Sciatic nerve (tissue), 2 donors: ENCODE measurements at regions of chr16 and their contacts with region 1.

Region 1: GRCh38 chr16:68436581-68436980 is 11.7 kb downstream of the SMPD3 start:
- DNase-seq: no peak
- ATAC-seq: no peak

Region 2: DNA sequence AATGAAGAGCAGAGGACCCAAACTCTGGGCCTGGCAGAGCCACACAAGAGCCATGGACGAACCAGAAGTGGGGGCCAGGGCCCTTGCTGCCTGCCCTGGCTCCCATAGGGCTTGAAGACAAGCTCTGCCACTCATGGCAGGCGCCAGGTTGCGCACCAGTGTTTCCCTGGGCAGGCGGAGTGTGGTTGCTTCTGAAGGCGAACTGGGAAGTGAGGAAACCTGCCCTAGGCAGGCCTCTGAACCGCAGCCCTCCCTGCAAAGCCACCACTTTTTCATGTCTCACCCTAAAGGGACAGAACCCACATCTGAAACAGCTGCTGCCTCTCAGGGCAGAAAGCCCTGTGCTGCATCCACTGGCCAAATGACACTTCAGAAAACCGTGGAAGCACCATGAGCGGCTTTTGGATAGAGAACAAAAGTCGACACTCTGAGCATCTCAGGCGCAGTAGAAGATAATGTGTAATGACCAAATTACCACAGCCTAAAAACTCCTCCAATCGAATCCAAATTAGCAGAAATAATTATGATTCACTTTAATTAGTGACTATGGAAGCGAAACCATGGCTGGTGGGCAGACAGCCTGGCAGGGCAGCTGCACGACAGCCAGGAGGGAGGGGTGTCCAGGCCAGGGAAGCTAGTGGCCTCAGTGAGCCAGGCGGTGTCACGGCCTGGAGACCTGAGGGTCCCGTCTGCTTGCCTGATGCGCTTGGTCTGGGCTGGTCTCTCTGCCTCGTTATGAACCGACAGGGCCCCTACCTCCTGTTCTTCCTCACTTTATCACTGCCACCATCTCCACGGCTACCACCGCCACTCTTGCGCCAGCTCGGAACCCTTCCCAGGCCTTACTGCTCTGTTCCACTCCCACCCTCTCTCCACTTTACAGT is 66.6 kb before region 1 on chr16:
- intact Hi-C with region 1: loop called (anchors 2 kb)
- DNase-seq: no peak
- ATAC-seq: no peak

Region 3: GRCh38 chr16:68486502-68487202 is 50.1 kb after region 1 on chr16:
- intact Hi-C with region 1: loop called (anchors 2 kb)
- DNase-seq: no peak
- ATAC-seq: no peak